Tibial artery (tissue), 4 donors: ENCODE measurements at regions of chr22 and their contacts with region 1.

Region 1: GRCh38 chr22:36387752-36388518 is at the start of gene MYH9:
- DNase-seq: peak; percentile 100
- H3K4me3 ChIP-seq: peak within 1 kb of the TSS; percentile 89 to 94
- H3K27ac ChIP-seq: peak within 1 kb of the TSS; percentile 95 to 98
- H3K4me1 ChIP-seq: peaks cover 0 to 32% (median 21%) of the 10 kb centered on the region in 4 donors
- H3K27me3 ChIP-seq: no peaks in the 10 kb centered on the region
- CTCF ChIP-seq: no peak

Region 2: DNA sequence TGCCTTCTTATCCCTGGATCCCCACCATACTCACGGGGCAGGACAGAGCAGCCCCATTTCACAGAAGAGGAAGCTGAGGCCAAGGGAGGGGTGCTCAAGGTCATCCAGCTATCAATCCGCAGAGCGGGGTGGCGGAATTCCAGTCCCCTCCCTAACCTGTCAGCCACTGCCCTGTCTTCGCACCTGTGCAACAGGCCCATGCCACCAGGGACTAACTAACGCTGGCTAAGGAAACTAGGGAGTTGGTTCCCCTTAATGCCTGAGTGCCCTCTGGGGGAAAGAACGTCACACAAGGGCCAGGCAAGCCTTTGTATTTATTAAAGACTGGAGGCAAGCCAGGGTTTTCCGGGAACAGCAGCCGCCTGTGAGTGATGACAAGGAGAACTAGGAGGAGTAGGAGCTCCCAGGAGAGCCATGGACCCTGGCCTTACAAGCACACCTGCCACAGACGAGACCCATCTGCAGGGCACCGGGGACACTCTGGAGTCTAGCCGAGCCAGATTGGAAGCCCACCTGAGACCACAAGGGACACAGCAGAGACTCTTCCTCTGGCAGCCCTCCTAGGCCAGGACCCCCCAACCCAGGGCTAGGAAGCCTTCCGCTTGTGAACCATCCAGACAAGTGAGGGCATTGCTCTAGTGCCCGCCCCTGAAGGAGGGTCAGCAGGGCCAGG is 64.6 kb before region 1 on chr22:
- intact Hi-C with region 1: loop called (anchors 5 kb)
- DNase-seq: peak; percentile 85 to 94
- H3K4me3 ChIP-seq: peak overlapping the region in 1 of 2 donors; percentile 9
- H3K27ac ChIP-seq: peak overlapping the region; percentile 95
- H3K4me1 ChIP-seq: peaks cover 0 to 95% (median 69%) of the 10 kb centered on the region in 4 donors
- H3K27me3 ChIP-seq: no peaks in the 10 kb centered on the region
- CTCF ChIP-seq: no peak

Region 3: DNA sequence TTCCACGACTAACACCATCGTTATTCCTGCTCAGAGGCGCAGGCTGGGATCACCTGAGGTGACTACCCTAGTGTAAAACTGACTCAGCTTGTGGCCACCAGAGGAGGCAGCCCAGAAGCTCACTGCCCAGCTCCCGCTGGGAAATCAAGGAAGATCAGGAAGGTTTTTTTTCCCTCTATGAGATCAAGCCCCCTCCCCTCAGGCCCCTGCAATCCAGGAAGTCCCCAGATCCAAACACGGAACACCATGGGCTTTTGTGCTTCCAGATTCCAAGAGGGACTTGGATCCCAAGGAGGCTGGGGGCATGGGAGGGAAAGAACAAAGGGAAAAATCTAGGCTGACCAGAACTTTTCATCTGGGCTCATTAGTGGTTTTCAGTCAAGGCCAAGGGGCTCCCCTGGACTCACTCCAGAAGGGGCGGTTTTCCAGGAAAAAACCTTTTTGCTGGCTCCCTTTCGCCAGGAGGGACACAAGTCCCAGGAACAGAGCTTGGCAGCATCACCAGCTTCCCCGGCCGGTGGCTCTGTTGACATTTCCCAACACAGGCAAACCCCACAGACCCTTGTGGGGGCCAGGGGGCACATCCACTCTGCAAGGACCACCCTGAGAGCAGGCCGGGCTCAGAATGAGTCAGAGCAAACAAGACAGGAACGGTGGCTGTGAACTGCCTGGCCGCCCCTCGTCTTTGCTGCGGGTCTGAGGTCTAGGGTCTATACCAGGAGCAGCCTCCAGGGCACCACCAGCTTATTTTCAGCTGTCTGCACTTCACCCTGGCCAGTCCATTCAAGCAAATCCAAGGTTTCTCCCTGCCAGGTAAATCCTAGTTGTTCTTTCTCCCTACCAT is 37.0 kb before region 1 on chr22:
- intact Hi-C with region 1: loop called (anchors 5 kb)
- DNase-seq: peak in 1 of 2 donors; percentile 88
- H3K4me3 ChIP-seq: peak overlapping the region; percentile 11 to 36
- H3K27ac ChIP-seq: peak overlapping the region; percentile 95
- H3K4me1 ChIP-seq: peaks cover 0 to 97% (median 89%) of the 10 kb centered on the region in 4 donors
- H3K27me3 ChIP-seq: no peaks in the 10 kb centered on the region
- CTCF ChIP-seq: peak in 1 of 2 experiments; percentile 11

Region 4: DNA sequence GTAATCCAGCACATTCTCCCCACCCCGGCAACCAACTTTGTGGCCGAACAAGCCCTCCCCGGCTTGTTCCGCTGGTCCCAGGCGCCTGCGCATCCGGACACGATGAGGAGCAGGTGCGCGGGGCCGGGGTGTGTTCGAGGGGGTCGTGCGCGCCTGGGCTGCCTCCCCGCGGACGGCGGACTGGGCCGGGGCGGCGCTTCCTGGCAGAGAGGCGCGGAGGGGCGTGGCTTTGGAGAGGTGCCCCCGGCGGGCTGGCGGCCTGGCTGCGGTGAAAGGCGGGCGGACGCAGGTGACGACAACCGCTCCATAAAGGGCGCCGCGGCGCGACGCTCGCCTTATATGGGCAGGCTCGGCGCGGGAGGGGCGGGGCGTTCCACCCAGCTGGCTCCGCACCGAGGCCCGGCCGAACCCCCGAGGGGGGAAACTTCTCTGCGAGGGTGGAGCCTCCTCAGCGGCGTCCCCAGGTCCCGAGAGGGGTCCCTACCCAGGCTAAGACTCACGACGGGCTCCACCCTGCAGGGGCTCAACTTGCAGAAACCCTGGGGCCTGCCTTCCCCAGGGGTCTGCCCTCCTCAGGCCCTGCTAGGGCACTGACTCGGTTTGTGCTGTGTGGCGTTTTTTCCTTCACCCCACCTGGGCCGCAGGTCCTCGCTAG is 67.1 kb after region 1 on chr22:
- intact Hi-C with region 1: loop called (anchors 5 kb)
- DNase-seq: peak; percentile 87 to 96
- H3K4me3 ChIP-seq: peak overlapping the region; percentile 60 to 68
- H3K27ac ChIP-seq: peak overlapping the region; percentile 95 to 97
- H3K4me1 ChIP-seq: peaks cover 0 to 63% (median 53%) of the 10 kb centered on the region in 4 donors
- H3K27me3 ChIP-seq: no peaks in the 10 kb centered on the region
- CTCF ChIP-seq: no peak

Region 5: GRCh38 chr22:36606114-36606513 is 218.2 kb after region 1 on chr22:
- intact Hi-C with region 1: no loop called
- DNase-seq: peak in 1 of 2 donors; percentile 54
- H3K4me3 ChIP-seq: no peak overlapping the region
- H3K27ac ChIP-seq: no peak overlapping the region
- H3K4me1 ChIP-seq: no peaks in the 10 kb centered on the region
- H3K27me3 ChIP-seq: peaks cover 0 to 45% of the 10 kb centered on the region in 2 donors
- CTCF ChIP-seq: no peak

Region 6: DNA sequence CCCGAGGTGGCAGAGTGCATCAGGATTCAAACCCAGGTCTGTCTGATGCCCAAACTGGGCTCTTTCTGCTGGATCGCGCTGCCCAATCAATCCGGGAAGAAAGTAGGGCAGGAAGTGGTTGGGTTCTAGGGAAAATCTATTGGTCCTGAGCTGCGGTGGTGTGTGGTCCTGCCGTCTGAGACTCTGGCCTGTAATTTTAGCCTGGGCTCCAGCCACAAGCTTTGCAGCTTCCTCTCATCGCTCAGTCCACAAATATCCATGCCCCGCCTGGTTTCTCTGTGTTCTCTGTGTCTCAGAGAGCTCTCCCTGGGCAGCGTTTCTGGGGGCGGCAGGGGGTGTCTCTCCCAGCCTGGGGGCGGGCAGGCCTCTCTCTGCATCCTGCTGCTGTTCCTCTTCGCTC is 296.9 kb after region 1 on chr22:
- intact Hi-C with region 1: no loop called
- DNase-seq: no peak
- H3K4me3 ChIP-seq: no peak overlapping the region
- H3K27ac ChIP-seq: no peak overlapping the region
- H3K4me1 ChIP-seq: no peaks in the 10 kb centered on the region
- H3K27me3 ChIP-seq: peaks cover 0 to 59% of the 10 kb centered on the region in 2 donors
- CTCF ChIP-seq: no peak